ENCODE measurements at regions of chr10 and their contacts with region 1.

Region 1: GRCh38 chr10:3482200-3483138 is 302.5 kb downstream of the KLF6 start:
- DNase-seq: no peak
- H3K4me3 Mint-ChIP-seq: no peak overlapping the region
- H3K27ac Mint-ChIP-seq: no peak overlapping the region
- H3K4me1 Mint-ChIP-seq: peaks cover 61% of the 10 kb centered on the region
- H3K27me3 Mint-ChIP-seq: no peaks in the 10 kb centered on the region

Region 2: GRCh38 chr10:2734603-2735002 is 747.9 kb before region 1 on chr10:
- intact Hi-C with region 1: no loop called
- DNase-seq: no peak
- H3K4me3 Mint-ChIP-seq: no peak overlapping the region
- H3K27ac Mint-ChIP-seq: no peak overlapping the region
- H3K4me1 Mint-ChIP-seq: no peaks in the 10 kb centered on the region
- H3K27me3 Mint-ChIP-seq: peaks cover 4% of the 10 kb centered on the region

Region 3: GRCh38 chr10:3445648-3446047 is 36.8 kb before region 1 on chr10:
- intact Hi-C with region 1: no loop called
- DNase-seq: no peak
- H3K4me3 Mint-ChIP-seq: no peak overlapping the region
- H3K27ac Mint-ChIP-seq: no peak overlapping the region
- H3K4me1 Mint-ChIP-seq: peaks cover 14% of the 10 kb centered on the region
- H3K27me3 Mint-ChIP-seq: peaks cover 41% of the 10 kb centered on the region

Region 4: GRCh38 chr10:3455385-3456334 is 26.8 kb before region 1 on chr10:
- intact Hi-C with region 1: no loop called
- DNase-seq: no peak
- H3K4me3 Mint-ChIP-seq: no peak overlapping the region
- H3K27ac Mint-ChIP-seq: peak overlapping the region; percentile 28
- H3K4me1 Mint-ChIP-seq: peaks cover 33% of the 10 kb centered on the region
- H3K27me3 Mint-ChIP-seq: peaks cover 5% of the 10 kb centered on the region

Region 5: GRCh38 chr10:3467052-3467951 is 15.2 kb before region 1 on chr10:
- intact Hi-C with region 1: loop called (anchors 2 kb)
- DNase-seq: no peak
- H3K4me3 Mint-ChIP-seq: peak overlapping the region; percentile 73
- H3K27ac Mint-ChIP-seq: peak overlapping the region; percentile 92
- H3K4me1 Mint-ChIP-seq: peaks cover 63% of the 10 kb centered on the region
- H3K27me3 Mint-ChIP-seq: no peaks in the 10 kb centered on the region

Region 6: GRCh38 chr10:3566627-3567026 is 84.2 kb after region 1 on chr10:
- intact Hi-C with region 1: loop called (anchors 10 kb)
- DNase-seq: no peak
- H3K4me3 Mint-ChIP-seq: no peak overlapping the region
- H3K27ac Mint-ChIP-seq: no peak overlapping the region
- H3K4me1 Mint-ChIP-seq: peaks cover 22% of the 10 kb centered on the region
- H3K27me3 Mint-ChIP-seq: peaks cover 4% of the 10 kb centered on the region

Region 7: DNA sequence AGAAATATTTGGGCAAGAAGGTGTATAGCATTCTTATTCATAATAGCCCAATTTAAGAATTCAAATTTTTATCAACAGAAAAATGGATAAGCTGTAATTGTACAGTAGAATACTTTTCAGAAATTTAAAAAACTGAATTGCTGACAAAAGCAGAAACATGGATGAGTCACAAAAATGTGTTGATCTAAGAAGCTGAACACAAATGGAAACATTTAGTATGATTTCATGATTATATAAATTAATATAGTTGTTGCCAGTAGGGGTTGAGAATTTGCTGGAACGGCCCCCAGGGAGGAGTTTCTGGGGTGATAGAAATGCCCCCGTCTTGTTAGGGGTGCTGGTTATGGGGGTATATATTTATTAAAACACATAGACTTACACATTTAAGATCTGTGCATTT is 123.4 kb after region 1 on chr10:
- intact Hi-C with region 1: loop called (anchors 5 kb)
- DNase-seq: no peak
- H3K4me3 Mint-ChIP-seq: no peak overlapping the region
- H3K27ac Mint-ChIP-seq: no peak overlapping the region
- H3K4me1 Mint-ChIP-seq: peaks cover 8% of the 10 kb centered on the region
- H3K27me3 Mint-ChIP-seq: peaks cover 29% of the 10 kb centered on the region